ENCODE measurements at regions of chr18 and their contacts with region 1.

Region 1: GRCh38 chr18:54852780-54853675 is 24.8 kb downstream of the RAB27B start:
- DNase-seq: no peak
- H3K4me3 Mint-ChIP-seq: peak overlapping the region; percentile 6
- H3K27ac Mint-ChIP-seq: no peak overlapping the region
- H3K4me1 Mint-ChIP-seq: peaks cover 22% of the 10 kb centered on the region
- H3K27me3 Mint-ChIP-seq: peaks cover 6% of the 10 kb centered on the region

Region 2: GRCh38 chr18:54812885-54813284 is 40.1 kb before region 1 on chr18:
- intact Hi-C with region 1: loop called (anchors 2 kb)
- DNase-seq: peak; percentile 30
- H3K4me3 Mint-ChIP-seq: no peak overlapping the region
- H3K27ac Mint-ChIP-seq: no peak overlapping the region
- H3K4me1 Mint-ChIP-seq: peaks cover 24% of the 10 kb centered on the region
- H3K27me3 Mint-ChIP-seq: peaks cover 49% of the 10 kb centered on the region

Region 3: DNA sequence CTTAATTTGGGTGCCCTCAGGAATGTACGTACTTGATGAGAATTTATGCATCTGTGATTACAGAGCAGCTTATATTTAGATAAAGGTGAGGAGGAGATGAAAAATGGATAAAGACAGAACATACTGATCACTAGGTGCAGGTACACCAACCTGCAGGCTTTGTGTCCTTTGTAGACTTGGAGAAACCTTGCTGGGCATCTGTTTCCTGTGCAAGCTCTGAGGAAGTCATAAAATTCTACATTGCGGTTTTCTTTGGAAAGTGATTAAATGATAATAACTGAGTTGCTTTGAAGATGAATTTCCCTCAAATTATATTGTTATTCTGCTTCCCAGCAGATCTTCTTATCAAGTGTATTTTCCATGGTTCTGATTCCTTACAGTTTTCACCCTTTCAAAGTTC is 17.1 kb before region 1 on chr18:
- intact Hi-C with region 1: loop called (anchors 2 kb)
- DNase-seq: no peak
- H3K4me3 Mint-ChIP-seq: peak overlapping the region; percentile 49
- H3K27ac Mint-ChIP-seq: peak overlapping the region; percentile 74
- H3K4me1 Mint-ChIP-seq: peaks cover 26% of the 10 kb centered on the region
- H3K27me3 Mint-ChIP-seq: peaks cover 4% of the 10 kb centered on the region

Region 4: GRCh38 chr18:54916507-54916906 is 63.5 kb after region 1 on chr18:
- intact Hi-C with region 1: no loop called
- DNase-seq: no peak
- H3K4me3 Mint-ChIP-seq: no peak overlapping the region
- H3K27ac Mint-ChIP-seq: no peak overlapping the region
- H3K4me1 Mint-ChIP-seq: no peaks in the 10 kb centered on the region
- H3K27me3 Mint-ChIP-seq: peaks cover 1% of the 10 kb centered on the region

Region 5: GRCh38 chr18:55012008-55012407 is 159.0 kb after region 1 on chr18:
- intact Hi-C with region 1: no loop called
- DNase-seq: no peak
- H3K4me3 Mint-ChIP-seq: no peak overlapping the region
- H3K27ac Mint-ChIP-seq: no peak overlapping the region
- H3K4me1 Mint-ChIP-seq: peaks cover 6% of the 10 kb centered on the region
- H3K27me3 Mint-ChIP-seq: peaks cover 5% of the 10 kb centered on the region

Region 6: GRCh38 chr18:55400590-55401541 is 547.8 kb after region 1 on chr18:
- intact Hi-C with region 1: no loop called
- DNase-seq: no peak
- H3K4me3 Mint-ChIP-seq: no peak overlapping the region
- H3K27ac Mint-ChIP-seq: no peak overlapping the region
- H3K4me1 Mint-ChIP-seq: peaks cover 8% of the 10 kb centered on the region
- H3K27me3 Mint-ChIP-seq: peaks cover 1% of the 10 kb centered on the region

Measured in activated T-helper 2 cell treated with anti-CD3 and anti-CD28 coated beads, Interferon-gamma antibody, Interleukin-2, Interleukin-4, amounts not matched to agents 10 μg/mL and 5 μg/mL and 100 μg/mL, durations not matched to agents 14 hours and 24 hours and 36 hours (primary cell).